Activated CD4-positive, alpha-beta memory T cell treated with anti-CD3 and anti-CD28 coated beads, Interleukin-2, amount 10 ng/mL, durations not matched to agents 7 days and 5 days (primary cell): ENCODE measurements at regions of chr1 and their contacts with region 1.

Region 1: DNA sequence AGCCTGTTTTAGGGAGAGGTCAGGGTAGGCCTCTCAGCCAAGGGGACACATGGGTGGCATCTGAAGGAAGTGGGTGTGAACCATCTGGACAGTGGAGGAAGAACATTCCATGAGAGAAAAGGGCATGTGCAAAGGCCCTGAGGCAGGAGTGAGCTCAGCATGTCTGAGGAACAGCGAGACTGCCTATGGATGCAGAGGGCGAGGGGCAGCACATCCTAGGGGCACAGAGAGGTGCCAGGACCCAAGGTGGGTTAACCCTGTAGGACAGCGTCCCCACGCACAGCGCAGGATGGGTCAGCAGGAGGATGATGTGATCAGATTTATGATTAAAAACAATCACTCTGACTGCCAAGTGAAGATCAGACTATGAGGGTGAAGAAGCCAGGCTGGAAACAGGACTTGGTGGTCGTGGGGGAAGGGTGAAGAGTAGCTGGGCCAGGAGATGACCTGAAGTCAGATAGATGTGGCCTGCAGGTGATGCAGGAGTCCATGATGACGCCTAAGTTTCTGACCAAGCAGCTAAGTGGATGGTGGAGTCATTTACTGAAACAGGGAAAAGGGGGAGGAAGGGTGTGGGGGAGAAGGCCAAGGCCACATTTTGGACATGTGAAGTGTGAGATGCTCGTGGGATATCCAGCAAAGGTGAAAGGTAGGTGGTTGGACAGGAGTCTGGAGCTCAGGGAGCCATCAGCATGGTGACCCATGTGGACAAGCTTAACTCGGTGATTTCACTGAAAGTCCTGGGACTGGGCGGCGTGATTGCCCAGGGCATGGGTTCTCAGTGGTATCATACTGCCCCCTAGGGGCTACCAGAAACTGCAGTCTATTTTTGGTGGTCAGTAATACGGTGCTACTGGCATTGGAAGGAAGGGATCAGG is 37.8 kb downstream of the PABPC4 start:
- DNase-seq: peak; percentile 62
- H3K4me3 Mint-ChIP-seq: no peak overlapping the region
- H3K27ac Mint-ChIP-seq: no peak overlapping the region
- H3K4me1 Mint-ChIP-seq: peaks cover 7% of the 10 kb centered on the region
- H3K27me3 Mint-ChIP-seq: no peaks in the 10 kb centered on the region

Region 2: DNA sequence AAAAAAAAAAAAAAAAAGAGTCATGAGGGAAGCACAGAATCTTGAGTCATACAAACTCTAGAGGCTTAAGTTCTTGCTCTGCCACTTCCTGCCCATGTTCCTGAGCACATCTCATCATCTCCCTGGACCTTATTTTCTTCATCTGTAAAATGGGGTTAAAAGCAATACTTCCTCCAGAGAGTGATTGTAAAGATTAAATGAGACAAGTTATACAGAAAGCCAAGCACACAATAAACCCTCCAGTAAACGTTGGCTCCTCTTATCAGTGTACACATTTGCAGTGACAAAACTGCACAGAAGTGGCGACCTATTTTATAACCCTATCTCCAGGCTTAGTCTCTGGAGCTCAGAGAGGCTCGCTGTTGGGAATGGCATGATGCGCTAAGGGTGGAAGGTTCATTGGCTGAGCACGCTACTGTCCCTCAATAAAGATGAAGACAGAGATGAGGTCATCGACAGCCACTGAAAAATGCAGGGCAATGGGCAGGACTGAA is 761.3 kb before region 1 on chr1:
- CTCF ChIA-PET with region 1: no interaction called
- POLR2A ChIA-PET with region 1: no interaction called
- DNase-seq: no peak
- H3K4me3 Mint-ChIP-seq: no peak overlapping the region
- H3K27ac Mint-ChIP-seq: no peak overlapping the region
- H3K4me1 Mint-ChIP-seq: no peaks in the 10 kb centered on the region
- H3K27me3 Mint-ChIP-seq: peaks cover 27% of the 10 kb centered on the region

Region 3: DNA sequence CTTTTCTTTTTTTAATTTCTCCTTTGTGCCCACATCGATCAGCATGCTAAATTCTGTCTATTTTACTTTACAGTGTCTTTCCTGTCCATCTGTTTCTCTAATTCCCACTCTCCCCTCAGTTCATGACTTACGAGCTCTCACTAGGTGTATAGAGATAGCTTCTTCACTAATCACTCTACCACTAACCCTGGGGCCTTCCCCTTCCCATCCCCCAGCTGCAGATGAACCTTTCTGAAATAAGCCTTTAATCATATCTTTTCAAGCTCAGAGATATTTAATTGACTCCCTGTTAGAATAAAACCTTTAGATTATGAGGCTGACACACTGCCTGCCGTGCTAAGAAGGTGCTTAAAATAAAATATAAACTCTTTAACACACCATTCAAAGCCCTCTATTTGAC is 113.7 kb before region 1 on chr1:
- CTCF ChIA-PET with region 1: interaction called, 17 read pairs
- POLR2A ChIA-PET with region 1: no interaction called
- DNase-seq: no peak
- H3K4me3 Mint-ChIP-seq: no peak overlapping the region
- H3K27ac Mint-ChIP-seq: no peak overlapping the region
- H3K4me1 Mint-ChIP-seq: peaks cover 13% of the 10 kb centered on the region
- H3K27me3 Mint-ChIP-seq: no peaks in the 10 kb centered on the region

Region 4: GRCh38 chr1:39501666-39502065 is 37.2 kb before region 1 on chr1:
- CTCF ChIA-PET with region 1: no interaction called
- POLR2A ChIA-PET with region 1: no interaction called
- DNase-seq: no peak
- H3K4me3 Mint-ChIP-seq: no peak overlapping the region
- H3K27ac Mint-ChIP-seq: no peak overlapping the region
- H3K4me1 Mint-ChIP-seq: no peaks in the 10 kb centered on the region
- H3K27me3 Mint-ChIP-seq: peaks cover 8% of the 10 kb centered on the region